Psoas muscle (tissue), 8 donors: ENCODE measurements at regions of chr1 and their contacts with region 1.

Region 1: GRCh38 chr1:57683037-57683942 is 259.4 kb upstream of the DAB1 start:
- DNase-seq: no peak
- ATAC-seq: peak; percentile 93 to 99 (median 94)
- H3K4me3 ChIP-seq: no peak overlapping the region
- H3K27ac ChIP-seq: peak overlapping the region; percentile 7
- H3K4me1 ChIP-seq: peaks cover 10% of the 10 kb centered on the region
- H3K27me3 ChIP-seq: no peaks in the 10 kb centered on the region
- CTCF ChIP-seq: no peak

Region 2: GRCh38 chr1:57536749-57537423 is 146.4 kb before region 1 on chr1:
- intact Hi-C with region 1: loop called in 1 of 2 experiments (anchors 5 kb)
- DNase-seq: peak in 1 of 2 donors; percentile 9
- ATAC-seq: peak; percentile 68 to 85 (median 80)
- H3K4me3 ChIP-seq: no peak overlapping the region
- H3K27ac ChIP-seq: no peak overlapping the region
- H3K4me1 ChIP-seq: no peaks in the 10 kb centered on the region
- H3K27me3 ChIP-seq: no peaks in the 10 kb centered on the region
- CTCF ChIP-seq: no peak

Region 3: GRCh38 chr1:57623039-57623790 is 60.1 kb before region 1 on chr1:
- intact Hi-C with region 1: loop called in 1 of 2 experiments (anchors 5 kb)
- DNase-seq: peak in 1 of 2 donors; percentile 22
- ATAC-seq: peak in 1 of 4 donors; percentile 82
- H3K4me3 ChIP-seq: no peak overlapping the region
- H3K27ac ChIP-seq: no peak overlapping the region
- H3K4me1 ChIP-seq: no peaks in the 10 kb centered on the region
- H3K27me3 ChIP-seq: no peaks in the 10 kb centered on the region
- CTCF ChIP-seq: no peak

Region 4: DNA sequence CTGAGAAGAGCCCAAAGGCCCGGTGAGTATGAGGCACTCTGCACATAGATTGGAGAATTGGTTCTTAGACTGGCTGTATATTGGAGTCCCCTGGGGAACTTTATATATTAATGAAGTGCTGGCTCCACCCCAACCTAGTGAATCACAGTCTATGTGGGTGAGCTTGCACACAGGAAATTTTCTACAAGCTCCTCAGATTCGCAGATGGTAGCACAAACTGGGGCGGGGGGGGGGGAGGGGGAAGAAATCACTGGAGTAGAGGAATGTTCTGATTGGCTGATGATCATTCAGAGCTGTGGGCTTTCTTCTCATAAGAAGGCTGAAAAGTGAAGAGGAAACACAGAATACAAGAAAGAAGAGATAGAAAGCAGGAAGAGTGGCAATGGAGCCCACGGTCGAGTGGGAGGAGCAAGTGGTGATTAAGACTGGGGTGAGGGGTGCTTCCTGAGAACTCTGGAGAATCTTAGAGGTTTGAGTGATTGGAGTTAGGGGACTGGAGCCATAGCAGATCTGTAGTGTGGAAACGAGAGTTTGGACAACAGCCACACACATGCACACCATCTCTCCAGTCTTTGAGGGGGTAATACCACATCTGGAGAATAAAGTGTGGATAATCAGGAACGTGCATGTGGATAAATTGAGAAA is 206.5 kb after region 1 on chr1:
- intact Hi-C with region 1: no loop called
- DNase-seq: no peak
- ATAC-seq: no peak
- H3K4me3 ChIP-seq: no peak overlapping the region
- H3K27ac ChIP-seq: no peak overlapping the region
- H3K4me1 ChIP-seq: no peaks in the 10 kb centered on the region
- H3K27me3 ChIP-seq: peaks cover 0 to 2% (median 0%) of the 10 kb centered on the region in 3 donors
- CTCF ChIP-seq: no peak

Region 5: DNA sequence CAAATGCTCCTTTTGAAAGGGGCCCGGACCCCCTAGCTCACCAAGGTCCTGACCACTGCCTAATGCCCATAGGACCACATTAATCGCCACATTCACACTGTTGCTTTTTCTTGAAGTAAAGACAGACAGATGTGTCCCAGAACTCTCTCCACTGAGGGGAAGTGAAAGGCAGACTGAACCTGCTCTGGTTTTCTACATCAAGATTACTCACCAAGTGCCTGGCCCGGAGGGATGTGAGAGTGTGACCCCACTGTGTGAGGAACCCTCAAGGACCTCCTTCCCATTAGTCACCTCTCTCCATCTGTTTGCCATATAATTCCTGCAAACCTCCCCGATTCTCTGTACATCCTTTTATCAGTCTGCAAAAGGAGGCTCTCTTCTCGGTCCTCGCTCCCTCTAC is 481.8 kb after region 1 on chr1:
- intact Hi-C with region 1: no loop called
- DNase-seq: no peak
- ATAC-seq: no peak
- H3K4me3 ChIP-seq: no peak overlapping the region
- H3K27ac ChIP-seq: no peak overlapping the region
- H3K4me1 ChIP-seq: peaks cover 5% of the 10 kb centered on the region
- H3K27me3 ChIP-seq: no peaks in the 10 kb centered on the region
- CTCF ChIP-seq: no peak